Activated CD8-positive, alpha-beta T cell treated with anti-CD3 and anti-CD28 coated beads for 36 hours (primary cell): ENCODE measurements at regions of chr2 and their contacts with region 1.

Region 1: GRCh38 chr2:111143107-111143842 is 22.6 kb downstream of the BCL2L11 start:
- DNase-seq: no peak
- ATAC-seq: no peak
- H3K4me3 Mint-ChIP-seq: no peak overlapping the region
- H3K27ac Mint-ChIP-seq: no peak overlapping the region
- H3K4me1 Mint-ChIP-seq: peaks cover 36% of the 10 kb centered on the region
- H3K27me3 Mint-ChIP-seq: no peaks in the 10 kb centered on the region
- CTCF ChIP-seq: no peak

Region 2: GRCh38 chr2:111111101-111111755 is 32.0 kb before region 1 on chr2:
- CTCF ChIA-PET with region 1: no interaction called
- POLR2A ChIA-PET with region 1: no interaction called
- intact Hi-C with region 1: no loop called
- DNase-seq: no peak
- ATAC-seq: peak; percentile 19
- H3K4me3 Mint-ChIP-seq: no peak overlapping the region
- H3K27ac Mint-ChIP-seq: no peak overlapping the region
- H3K4me1 Mint-ChIP-seq: peaks cover 24% of the 10 kb centered on the region
- H3K27me3 Mint-ChIP-seq: peaks cover 36% of the 10 kb centered on the region
- CTCF ChIP-seq: no peak

Region 3: GRCh38 chr2:111157798-111158197 is 14.5 kb after region 1 on chr2:
- CTCF ChIA-PET with region 1: interaction called, 11 read pairs
- POLR2A ChIA-PET with region 1: interaction called, 3 read pairs
- intact Hi-C with region 1: no loop called
- DNase-seq: peak; percentile 10
- ATAC-seq: peak; percentile 41
- H3K4me3 Mint-ChIP-seq: no peak overlapping the region
- H3K27ac Mint-ChIP-seq: no peak overlapping the region
- H3K4me1 Mint-ChIP-seq: peaks cover 52% of the 10 kb centered on the region
- H3K27me3 Mint-ChIP-seq: no peaks in the 10 kb centered on the region
- CTCF ChIP-seq: no peak